Activated B cell treated with CpG ODN at 0.5 μM for 24 hours (primary cell): ENCODE measurements at regions of chr4 and their contacts with region 1.

Region 1: GRCh38 chr4:112626228-112626627 is 10.5 kb downstream of the ZGRF1 start:
- DNase-seq: no peak
- ATAC-seq: no peak
- H3K4me3 Mint-ChIP-seq: no peak overlapping the region
- H3K27ac Mint-ChIP-seq: no peak overlapping the region
- H3K4me1 Mint-ChIP-seq: no peaks in the 10 kb centered on the region
- H3K27me3 Mint-ChIP-seq: no peaks in the 10 kb centered on the region
- CTCF ChIP-seq: no peak

Region 2: GRCh38 chr4:112664611-112665010 is 38.4 kb after region 1 on chr4:
- CTCF ChIA-PET with region 1: no interaction called
- POLR2A ChIA-PET with region 1: no interaction called
- intact Hi-C with region 1: loop called (anchors 1 kb)
- DNase-seq: no peak
- ATAC-seq: no peak
- H3K4me3 Mint-ChIP-seq: no peak overlapping the region
- H3K27ac Mint-ChIP-seq: no peak overlapping the region
- H3K4me1 Mint-ChIP-seq: no peaks in the 10 kb centered on the region
- H3K27me3 Mint-ChIP-seq: no peaks in the 10 kb centered on the region
- CTCF ChIP-seq: no peak

Region 3: GRCh38 chr4:114626207-114626606 is 2000.0 kb after region 1 on chr4:
- CTCF ChIA-PET with region 1: no interaction called
- POLR2A ChIA-PET with region 1: no interaction called
- intact Hi-C with region 1: no loop called
- DNase-seq: no peak
- ATAC-seq: no peak
- H3K4me3 Mint-ChIP-seq: no peak overlapping the region
- H3K27ac Mint-ChIP-seq: no peak overlapping the region
- H3K4me1 Mint-ChIP-seq: peaks cover 30% of the 10 kb centered on the region
- H3K27me3 Mint-ChIP-seq: no peaks in the 10 kb centered on the region
- CTCF ChIP-seq: no peak